ENCODE measurements at regions of chr11 and their contacts with region 1.

Region 1: GRCh38 chr11:109956124-109956793 is 136.9 kb upstream of the ZC3H12C start:
- DNase-seq: no peak
- ATAC-seq: no peak
- H3K4me3 ChIP-seq: no peak overlapping the region
- H3K27ac ChIP-seq: no peak overlapping the region
- H3K4me1 ChIP-seq: no peaks in the 10 kb centered on the region
- H3K27me3 ChIP-seq: no peaks in the 10 kb centered on the region

Region 2: DNA sequence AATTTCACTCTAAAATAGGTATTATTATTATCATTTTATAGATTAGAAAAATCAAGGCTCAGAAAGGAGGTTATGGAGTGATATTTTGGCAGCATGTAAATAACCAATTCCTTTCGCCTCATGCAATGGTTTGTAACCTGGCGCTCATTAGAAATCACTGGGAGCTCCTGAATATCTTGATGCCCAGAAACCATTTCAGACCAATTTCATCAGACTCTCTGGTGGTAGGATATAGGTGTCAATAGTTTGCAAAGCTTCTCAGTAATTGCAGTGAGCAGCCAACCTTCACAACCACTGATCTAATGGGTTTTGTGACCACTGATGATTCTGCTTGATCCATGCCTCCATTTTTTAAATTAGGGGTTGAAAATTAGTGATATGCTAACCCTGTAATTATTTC is 79.1 kb after region 1 on chr11:
- intact Hi-C with region 1: no loop called
- DNase-seq: no peak
- ATAC-seq: no peak
- H3K4me3 ChIP-seq: no peak overlapping the region
- H3K27ac ChIP-seq: no peak overlapping the region
- H3K4me1 ChIP-seq: no peaks in the 10 kb centered on the region
- H3K27me3 ChIP-seq: no peaks in the 10 kb centered on the region

Region 3: DNA sequence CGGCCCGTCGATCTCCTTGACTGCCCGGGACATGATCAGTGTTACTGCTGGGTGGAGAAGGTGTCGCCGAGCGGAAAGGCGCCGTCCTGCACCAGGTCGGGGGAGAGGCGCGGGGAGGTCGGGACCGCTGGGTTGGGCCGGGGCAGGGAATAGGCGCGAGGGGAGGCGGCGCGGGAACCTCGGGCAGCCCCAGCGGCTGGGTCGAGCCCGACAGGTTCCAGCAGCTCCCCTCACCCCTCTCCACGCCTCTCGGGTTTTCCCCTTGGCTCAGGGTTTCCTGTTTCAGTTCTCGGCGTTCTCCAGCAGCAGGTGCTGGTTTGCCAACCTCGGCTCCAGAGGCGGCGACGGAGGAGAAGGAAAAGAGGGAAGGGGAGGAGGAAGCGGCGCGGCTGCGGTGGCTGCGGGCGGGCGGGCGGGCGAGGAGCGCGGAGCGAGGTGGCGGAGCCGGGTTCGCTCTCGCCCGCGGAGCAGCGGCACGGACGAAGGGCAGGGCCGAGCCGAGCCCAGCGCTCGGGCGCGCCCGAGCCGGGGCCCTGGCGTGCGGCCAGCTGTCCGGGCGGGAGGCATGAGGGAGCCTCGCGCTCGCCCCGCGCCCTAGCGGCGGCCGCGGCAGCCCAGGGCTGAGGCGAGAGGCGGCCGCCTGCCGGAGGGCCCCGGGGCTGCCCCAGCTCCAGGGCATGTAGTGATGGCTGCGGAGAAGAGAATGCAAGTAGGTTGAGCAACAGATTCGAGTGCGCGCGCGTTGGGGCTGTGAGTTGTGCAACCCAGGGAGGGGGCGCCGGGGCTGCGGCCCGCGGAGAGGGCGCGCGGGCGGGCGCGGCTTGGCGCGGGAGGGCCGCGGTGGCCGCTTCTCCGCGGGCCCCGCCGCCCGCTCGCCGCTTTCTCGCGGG is 136.5 kb after region 1 on chr11 and contains the start of gene ZC3H12C:
- intact Hi-C with region 1: loop called in 2 of 4 experiments (anchors 5 to 10 kb)
- DNase-seq: peak; percentile 84 to 93 (median 93)
- ATAC-seq: peak; percentile 86 to 93
- H3K4me3 ChIP-seq: peak within 1 kb of the TSS; percentile 85
- H3K27ac ChIP-seq: peak within 1 kb of the TSS; percentile 95
- H3K4me1 ChIP-seq: no peaks in the 10 kb centered on the region
- H3K27me3 ChIP-seq: no peaks in the 10 kb centered on the region
- total RNA-seq, gene ZC3H12C: 13.6 to 17.2 (median 14.7) TPM

Measured in right cardiac atrium (tissue), 5 donors.